ENCODE measurements at regions of chr5 and their contacts with region 1.

Region 1: DNA sequence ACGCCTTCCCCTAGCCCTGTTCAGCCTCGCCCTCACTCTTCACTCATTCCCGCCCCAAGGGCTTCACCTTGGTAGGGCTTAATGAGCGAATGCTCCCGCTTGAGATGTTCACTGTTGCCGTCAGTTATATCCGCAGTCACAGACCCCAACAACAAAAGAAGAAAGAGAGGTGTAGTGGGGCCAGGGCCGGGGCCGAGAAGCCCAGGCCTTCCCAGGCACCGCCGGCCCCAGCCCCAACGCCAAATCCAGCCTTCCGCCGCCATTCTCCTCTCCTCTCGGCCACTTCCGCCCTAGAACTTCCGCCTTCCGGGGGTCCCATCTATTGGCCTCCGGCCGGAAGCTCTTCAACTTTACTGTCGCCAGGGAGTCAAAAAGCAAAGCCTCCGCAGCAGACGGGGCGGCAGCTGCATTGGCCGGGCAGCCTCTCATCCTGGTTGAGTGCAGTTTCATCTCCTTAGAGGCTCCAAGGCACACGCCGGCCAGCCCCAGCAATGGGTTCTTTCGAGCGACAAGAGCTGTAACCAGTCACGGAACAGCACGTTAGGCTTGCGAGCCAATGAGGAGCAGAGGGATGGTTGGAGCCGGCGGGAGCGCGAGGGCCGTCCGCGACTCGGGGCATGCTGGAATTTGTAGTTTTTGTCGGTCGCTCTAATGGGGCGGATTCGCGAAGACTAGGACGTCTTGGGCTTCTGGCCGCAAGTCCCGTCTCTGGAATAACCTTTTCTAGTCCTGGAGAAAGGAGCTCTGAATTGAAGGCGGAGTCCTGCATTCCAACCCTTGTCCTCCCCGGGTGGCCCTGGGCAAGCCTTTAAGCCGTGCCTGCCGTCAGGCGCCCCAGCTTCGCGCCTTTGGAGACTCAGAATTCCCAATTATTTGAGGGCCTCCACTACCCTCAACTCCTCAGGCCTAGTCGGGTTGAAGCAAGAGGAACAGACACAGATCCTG is at the start of gene LMAN2:
- DNase-seq: peak; percentile 82 to 97 (median 91)
- ATAC-seq: peak; percentile 97
- H3K4me3 ChIP-seq: peak within 1 kb of the TSS; percentile 79 to 90
- H3K4me3 Mint-ChIP-seq: peak within 1 kb of the TSS; percentile 96
- H3K27ac ChIP-seq: peak within 1 kb of the TSS; percentile 89 to 91
- H3K27ac Mint-ChIP-seq: peak within 1 kb of the TSS; percentile 99
- H3K4me1 ChIP-seq: peaks cover 55% of the 10 kb centered on the region
- H3K4me1 Mint-ChIP-seq: peaks cover 72% of the 10 kb centered on the region
- H3K27me3 ChIP-seq: no peaks in the 10 kb centered on the region
- H3K27me3 Mint-ChIP-seq: no peaks in the 10 kb centered on the region
- CTCF ChIP-seq: no peak
- total RNA-seq, gene LMAN2: 49.0 to 61.4 TPM

Region 2: DNA sequence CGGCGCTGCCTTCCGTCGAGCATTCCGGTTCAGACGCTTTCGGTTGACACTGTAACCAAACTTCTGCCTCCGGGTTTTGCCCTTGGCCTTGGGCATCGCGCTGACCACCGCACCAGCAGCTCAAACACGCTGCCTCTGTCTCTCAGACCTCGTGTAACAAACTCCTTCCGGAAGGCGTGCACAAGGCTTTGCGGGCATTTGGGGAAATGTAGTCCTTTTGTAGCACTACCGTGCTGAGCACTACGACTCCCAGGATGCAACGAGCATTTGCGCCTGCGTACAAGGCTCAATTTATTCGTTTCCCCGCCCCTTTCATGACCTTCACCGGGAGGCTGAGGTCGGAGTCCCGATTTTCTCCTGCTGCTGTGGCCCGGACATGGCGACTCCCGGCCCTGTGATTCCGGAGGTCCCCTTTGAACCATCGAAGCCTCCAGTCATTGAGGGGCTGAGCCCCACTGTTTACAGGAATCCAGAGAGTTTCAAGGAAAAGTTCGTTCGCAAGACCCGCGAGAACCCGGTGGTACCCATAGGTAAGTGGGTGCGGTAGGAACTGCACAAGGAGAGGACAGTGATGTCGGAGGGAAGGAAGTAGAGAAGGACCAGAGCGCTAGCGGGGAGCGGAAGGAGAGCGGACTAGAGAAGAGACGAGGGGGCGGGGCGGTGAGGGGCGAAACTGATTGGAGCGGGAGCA is 963.1 kb before region 1 on chr5 and contains the starts of genes HIGD2A and NOP16:
- CTCF ChIA-PET with region 1: no interaction called
- POLR2A ChIA-PET with region 1: no interaction called
- intact Hi-C with region 1: loop called (anchors 2 kb)
- DNase-seq: peak; percentile 97 to 100 (median 99)
- ATAC-seq: peak; percentile 90
- H3K4me3 ChIP-seq: peak within 1 kb of the TSS; percentile 87 to 89
- H3K4me3 Mint-ChIP-seq: peak within 1 kb of the TSS; percentile 99
- H3K27ac ChIP-seq: peak within 1 kb of the TSS; percentile 90 to 93
- H3K27ac Mint-ChIP-seq: peak within 1 kb of the TSS; percentile 99
- H3K4me1 ChIP-seq: peaks cover 22% of the 10 kb centered on the region
- H3K4me1 Mint-ChIP-seq: peaks cover 36% of the 10 kb centered on the region
- H3K27me3 ChIP-seq: no peaks in the 10 kb centered on the region
- H3K27me3 Mint-ChIP-seq: no peaks in the 10 kb centered on the region
- CTCF ChIP-seq: no peak
- total RNA-seq, gene HIGD2A: 102 to 106 TPM
- total RNA-seq, gene NOP16: 21.6 to 24.2 TPM

Region 3: DNA sequence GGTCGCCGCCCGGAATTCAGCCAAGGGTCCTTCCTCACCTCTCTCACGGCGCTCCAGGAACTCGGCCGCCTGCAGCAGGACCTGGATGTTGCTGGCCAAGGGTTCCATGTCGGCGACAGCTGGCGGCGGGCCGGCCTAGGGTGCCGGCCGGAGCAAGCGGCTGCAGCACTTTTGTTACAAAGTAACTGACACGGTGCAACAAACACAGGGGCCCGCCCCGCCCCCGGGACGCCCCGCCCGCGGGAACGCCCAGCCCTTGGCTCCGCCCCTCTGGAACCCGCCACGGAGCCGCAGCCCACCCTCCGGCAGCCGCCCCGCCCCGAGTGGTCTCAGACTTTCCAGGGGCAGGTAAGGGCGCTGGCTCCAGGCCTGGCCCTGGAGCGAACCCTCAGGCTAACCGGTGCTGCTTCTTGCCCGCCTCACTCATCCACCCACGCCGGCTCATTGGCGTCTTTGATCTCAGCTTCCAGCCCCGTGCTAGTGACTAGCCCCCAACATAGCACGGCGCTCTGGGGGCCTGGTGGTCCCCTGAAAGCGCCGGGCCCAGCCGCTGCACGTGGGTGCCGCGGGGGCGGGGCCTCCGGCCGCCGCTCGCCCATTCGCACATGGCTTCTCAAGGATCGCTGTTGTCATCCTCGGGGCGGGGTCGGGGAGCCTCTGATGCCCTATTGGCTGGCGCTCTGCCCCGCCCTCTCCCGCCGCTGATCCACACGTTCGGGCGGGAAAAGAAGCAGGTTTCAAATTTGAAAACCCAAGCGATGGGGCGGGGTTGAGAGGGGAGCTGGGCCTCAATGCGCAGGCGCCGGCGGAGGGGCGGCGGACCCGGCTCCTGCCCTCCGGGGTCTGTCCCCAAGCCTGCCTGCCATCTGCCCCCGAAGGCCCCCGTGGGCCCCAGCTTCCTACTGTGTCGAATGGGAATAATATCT is 39.7 kb before region 1 on chr5 and contains the start of gene MXD3:
- CTCF ChIA-PET with region 1: interaction called, 36 read pairs
- POLR2A ChIA-PET with region 1: interaction called, 3 read pairs
- intact Hi-C with region 1: loop called (anchors 1 kb)
- DNase-seq: peak; percentile 88 to 96 (median 94)
- ATAC-seq: peak; percentile 91
- H3K4me3 ChIP-seq: peak within 1 kb of the TSS; percentile 63 to 79
- H3K4me3 Mint-ChIP-seq: peak within 1 kb of the TSS; percentile 80
- H3K27ac ChIP-seq: peak within 1 kb of the TSS in 1 of 2 experiments; percentile 58
- H3K27ac Mint-ChIP-seq: peak within 1 kb of the TSS; percentile 49
- H3K4me1 ChIP-seq: peaks cover 36% of the 10 kb centered on the region
- H3K4me1 Mint-ChIP-seq: peaks cover 25% of the 10 kb centered on the region
- H3K27me3 ChIP-seq: no peaks in the 10 kb centered on the region
- H3K27me3 Mint-ChIP-seq: peaks cover 2% of the 10 kb centered on the region
- CTCF ChIP-seq: no peak
- total RNA-seq, gene MXD3: 6.2 to 8.5 TPM

Region 4: GRCh38 chr5:177362610-177363507 is 11.2 kb after region 1 on chr5:
- CTCF ChIA-PET with region 1: interaction called, 8 read pairs
- POLR2A ChIA-PET with region 1: interaction called, 13 read pairs
- intact Hi-C with region 1: loop called in 1 of 2 experiments (anchors 1 kb)
- DNase-seq: peak; percentile 31 to 92 (median 67)
- ATAC-seq: peak; percentile 74
- H3K4me3 ChIP-seq: peak overlapping the region; percentile 47 to 54
- H3K4me3 Mint-ChIP-seq: peak overlapping the region; percentile 84
- H3K27ac ChIP-seq: peak overlapping the region; percentile 46 to 70
- H3K27ac Mint-ChIP-seq: peak overlapping the region; percentile 89
- H3K4me1 ChIP-seq: peaks cover 70% of the 10 kb centered on the region
- H3K4me1 Mint-ChIP-seq: peaks cover 67% of the 10 kb centered on the region
- H3K27me3 ChIP-seq: no peaks in the 10 kb centered on the region
- H3K27me3 Mint-ChIP-seq: no peaks in the 10 kb centered on the region
- CTCF ChIP-seq: no peak

Region 5: GRCh38 chr5:177403792-177404640 is 52.4 kb after region 1 on chr5:
- CTCF ChIA-PET with region 1: interaction called, 28 read pairs
- POLR2A ChIA-PET with region 1: interaction called, 3 read pairs
- intact Hi-C with region 1: no loop called
- DNase-seq: peak; percentile 74 to 94 (median 85)
- ATAC-seq: peak; percentile 73
- H3K4me3 ChIP-seq: peak overlapping the region; percentile 52 to 72
- H3K4me3 Mint-ChIP-seq: peak overlapping the region; percentile 79
- H3K27ac ChIP-seq: peak overlapping the region in 1 of 2 experiments; percentile 59
- H3K27ac Mint-ChIP-seq: no peak overlapping the region
- H3K4me1 ChIP-seq: peaks cover 44% of the 10 kb centered on the region
- H3K4me1 Mint-ChIP-seq: peaks cover 38% of the 10 kb centered on the region
- H3K27me3 ChIP-seq: peaks cover 0 to 2% of the 10 kb centered on the region in 2 experiments
- H3K27me3 Mint-ChIP-seq: no peaks in the 10 kb centered on the region
- CTCF ChIP-seq: peak; percentile 52

Region 6: DNA sequence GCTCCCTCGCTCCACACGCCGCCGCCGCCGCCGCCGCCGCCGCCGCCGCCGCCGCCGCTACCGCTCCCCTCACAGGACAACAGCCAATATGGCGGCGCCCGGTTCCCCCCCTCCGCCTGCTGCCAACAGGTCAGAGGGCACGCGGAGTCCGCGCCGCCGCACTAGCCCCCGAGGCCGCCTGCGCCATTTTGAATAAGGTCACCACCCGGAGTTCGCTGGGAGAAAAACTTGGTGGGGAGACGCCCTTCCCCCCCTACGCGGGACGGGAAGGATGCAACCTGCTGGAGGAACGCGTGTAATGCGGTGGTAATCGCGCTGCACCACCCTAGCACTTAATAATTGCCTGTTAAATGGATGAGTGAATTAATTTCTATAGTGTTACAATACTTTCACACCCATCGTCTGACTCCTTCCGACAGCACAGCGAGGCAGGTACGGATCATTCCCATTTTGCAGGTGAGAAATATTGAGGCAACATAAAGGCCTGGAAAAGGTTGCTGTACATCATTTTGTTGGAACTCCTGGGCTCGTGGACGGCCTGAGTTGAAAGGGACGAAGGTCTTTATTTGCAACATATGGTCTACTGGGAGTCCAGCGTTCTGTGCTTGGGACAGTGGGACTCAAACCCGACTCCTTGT is 202.9 kb after region 1 on chr5 and contains the start of gene FAM193B:
- CTCF ChIA-PET with region 1: no interaction called
- POLR2A ChIA-PET with region 1: no interaction called
- intact Hi-C with region 1: loop called in 1 of 2 experiments (anchors 1 kb)
- DNase-seq: peak; percentile 88 to 97 (median 94)
- ATAC-seq: peak; percentile 99
- H3K4me3 ChIP-seq: peak within 1 kb of the TSS; percentile 62 to 80
- H3K4me3 Mint-ChIP-seq: peak within 1 kb of the TSS; percentile 89
- H3K27ac ChIP-seq: peak within 1 kb of the TSS; percentile 38 to 49
- H3K27ac Mint-ChIP-seq: peak within 1 kb of the TSS; percentile 82
- H3K4me1 ChIP-seq: peaks cover 20% of the 10 kb centered on the region
- H3K4me1 Mint-ChIP-seq: peaks cover 34% of the 10 kb centered on the region
- H3K27me3 ChIP-seq: no peaks in the 10 kb centered on the region
- H3K27me3 Mint-ChIP-seq: no peaks in the 10 kb centered on the region
- CTCF ChIP-seq: no peak
- total RNA-seq, gene FAM193B: 136 to 141 TPM

Region 7: DNA sequence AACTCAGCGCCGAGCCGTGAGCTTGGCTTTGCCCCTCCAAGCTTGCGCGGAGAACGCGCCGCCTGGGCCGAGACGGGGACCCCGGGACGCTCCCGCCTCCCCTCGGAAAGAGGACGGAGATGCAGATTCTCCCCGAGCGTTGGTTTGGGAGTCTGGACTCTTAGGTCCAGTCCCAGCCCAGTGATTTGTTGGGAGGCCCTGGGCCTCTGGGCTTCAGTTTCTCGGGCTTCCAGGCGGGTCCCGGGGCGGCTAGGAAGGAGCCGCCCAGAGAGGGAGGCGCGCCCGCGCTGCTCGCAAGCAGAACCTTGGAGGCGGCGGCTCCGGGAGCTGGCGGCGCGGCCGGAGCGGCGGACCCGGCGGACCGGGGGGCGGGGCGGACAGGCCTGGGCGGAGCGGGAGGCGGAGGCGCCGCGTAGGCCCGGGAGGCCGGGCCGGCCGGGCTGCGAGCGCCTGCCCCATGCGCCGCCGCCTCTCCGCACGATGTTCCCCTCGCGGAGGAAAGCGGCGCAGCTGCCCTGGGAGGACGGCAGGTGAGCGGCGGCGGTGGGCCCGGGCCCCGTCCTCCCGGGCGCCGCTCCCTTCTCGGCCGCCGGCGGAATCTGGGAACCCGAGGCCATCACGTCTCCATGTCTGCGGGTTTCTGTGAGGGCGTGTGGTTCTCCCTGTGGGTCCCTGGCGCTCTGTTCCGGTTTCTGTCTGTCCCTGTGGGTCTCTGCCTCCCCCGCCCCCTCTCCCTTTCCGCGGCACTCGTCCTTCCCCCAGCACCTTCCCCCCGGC is 248.3 kb after region 1 on chr5 and contains the start of gene B4GALT7:
- CTCF ChIA-PET with region 1: no interaction called
- POLR2A ChIA-PET with region 1: no interaction called
- intact Hi-C with region 1: loop called (anchors 1 to 10 kb)
- DNase-seq: peak; percentile 73 to 94 (median 82)
- ATAC-seq: peak; percentile 91
- H3K4me3 ChIP-seq: peak within 1 kb of the TSS; percentile 90 to 92
- H3K4me3 Mint-ChIP-seq: peak within 1 kb of the TSS; percentile 90
- H3K27ac ChIP-seq: peak within 1 kb of the TSS; percentile 65 to 78
- H3K27ac Mint-ChIP-seq: peak within 1 kb of the TSS; percentile 83
- H3K4me1 ChIP-seq: peaks cover 13% of the 10 kb centered on the region
- H3K4me1 Mint-ChIP-seq: peaks cover 29% of the 10 kb centered on the region
- H3K27me3 ChIP-seq: no peaks in the 10 kb centered on the region
- H3K27me3 Mint-ChIP-seq: no peaks in the 10 kb centered on the region
- CTCF ChIP-seq: no peak
- total RNA-seq, gene B4GALT7: 33.4 to 36.6 TPM

Region 8: GRCh38 chr5:178153573-178154343 is 802.1 kb after region 1 on chr5 and contains the start of gene NHP2:
- CTCF ChIA-PET with region 1: no interaction called
- POLR2A ChIA-PET with region 1: no interaction called
- intact Hi-C with region 1: no loop called
- DNase-seq: peak; percentile 92 to 98 (median 97)
- ATAC-seq: peak; percentile 99
- H3K4me3 ChIP-seq: peak within 1 kb of the TSS; percentile 81 to 94
- H3K4me3 Mint-ChIP-seq: peak within 1 kb of the TSS; percentile 97
- H3K27ac ChIP-seq: peak within 1 kb of the TSS; percentile 51 to 62
- H3K27ac Mint-ChIP-seq: peak within 1 kb of the TSS; percentile 92
- H3K4me1 ChIP-seq: peaks cover 12% of the 10 kb centered on the region
- H3K4me1 Mint-ChIP-seq: peaks cover 26% of the 10 kb centered on the region
- H3K27me3 ChIP-seq: no peaks in the 10 kb centered on the region
- H3K27me3 Mint-ChIP-seq: no peaks in the 10 kb centered on the region
- CTCF ChIP-seq: no peak
- total RNA-seq, gene NHP2: 48.8 to 49.6 TPM